CD14-positive monocyte (primary cell): ENCODE measurements at regions of chr4 and their contacts with region 1.

Region 1: GRCh38 chr4:5050520-5051277 is 581 bp upstream of the STK32B start:
- DNase-seq: peak; percentile 56 to 76 (median 70)
- H3K4me3 ChIP-seq: peak overlapping the region; percentile 52 to 85 (median 74)
- H3K4me3 Mint-ChIP-seq: peak overlapping the region; percentile 97 to 99
- H3K27ac ChIP-seq: peak overlapping the region in 1 of 2 donors; percentile 15
- H3K27ac Mint-ChIP-seq: peak overlapping the region in 5 of 7 donors; percentile 60 to 85 (median 74)
- H3K4me1 ChIP-seq: peaks cover 26 to 32% of the 10 kb centered on the region in 2 donors
- H3K4me1 Mint-ChIP-seq: peaks cover 46% of the 10 kb centered on the region
- H3K27me3 ChIP-seq: peaks cover 0 to 9% of the 10 kb centered on the region in 2 donors
- H3K27me3 Mint-ChIP-seq: peaks cover 3 to 7% (median 7%) of the 10 kb centered on the region in 3 donors
- CTCF ChIP-seq: peak; percentile 67

Region 2: GRCh38 chr4:4880492-4880891 is 170.2 kb before region 1 on chr4:
- intact Hi-C with region 1: no loop called
- DNase-seq: no peak
- H3K4me3 ChIP-seq: no peak overlapping the region
- H3K4me3 Mint-ChIP-seq: no peak overlapping the region
- H3K27ac ChIP-seq: no peak overlapping the region
- H3K27ac Mint-ChIP-seq: no peak overlapping the region
- H3K4me1 ChIP-seq: no peaks in the 10 kb centered on the region
- H3K4me1 Mint-ChIP-seq: no peaks in the 10 kb centered on the region
- H3K27me3 ChIP-seq: peaks cover 1 to 7% of the 10 kb centered on the region in 2 donors
- H3K27me3 Mint-ChIP-seq: peaks cover 17 to 22% (median 22%) of the 10 kb centered on the region in 3 donors
- CTCF ChIP-seq: no peak

Region 3: DNA sequence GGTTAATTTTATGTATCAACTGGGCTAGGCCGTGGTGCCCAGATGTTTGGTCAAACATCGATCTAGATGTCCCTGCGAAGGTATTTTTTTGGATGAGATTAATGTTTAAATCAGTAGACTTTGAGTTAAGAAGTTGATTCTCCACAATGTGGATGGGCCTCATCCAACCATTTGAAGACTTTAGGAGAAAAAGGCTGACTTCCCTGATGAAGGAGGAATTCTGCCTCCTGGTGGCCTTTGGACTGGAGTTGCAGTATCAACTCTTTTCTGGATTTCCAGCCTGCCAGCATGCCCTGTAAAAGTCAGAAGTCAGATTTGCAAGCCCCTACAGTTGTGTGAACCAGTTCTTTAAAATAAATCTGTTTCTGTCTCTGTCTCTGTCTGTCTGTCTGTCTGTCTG is 92.0 kb after region 1 on chr4:
- intact Hi-C with region 1: loop called in 1 of 2 experiments (anchors 5 kb)
- DNase-seq: peak; percentile 14 to 40 (median 32)
- H3K4me3 ChIP-seq: no peak overlapping the region
- H3K4me3 Mint-ChIP-seq: no peak overlapping the region
- H3K27ac ChIP-seq: no peak overlapping the region
- H3K27ac Mint-ChIP-seq: no peak overlapping the region
- H3K4me1 ChIP-seq: no peaks in the 10 kb centered on the region
- H3K4me1 Mint-ChIP-seq: no peaks in the 10 kb centered on the region
- H3K27me3 ChIP-seq: no peaks in the 10 kb centered on the region
- H3K27me3 Mint-ChIP-seq: peaks cover 0 to 5% (median 3%) of the 10 kb centered on the region in 3 donors
- CTCF ChIP-seq: peak; percentile 65

Region 4: DNA sequence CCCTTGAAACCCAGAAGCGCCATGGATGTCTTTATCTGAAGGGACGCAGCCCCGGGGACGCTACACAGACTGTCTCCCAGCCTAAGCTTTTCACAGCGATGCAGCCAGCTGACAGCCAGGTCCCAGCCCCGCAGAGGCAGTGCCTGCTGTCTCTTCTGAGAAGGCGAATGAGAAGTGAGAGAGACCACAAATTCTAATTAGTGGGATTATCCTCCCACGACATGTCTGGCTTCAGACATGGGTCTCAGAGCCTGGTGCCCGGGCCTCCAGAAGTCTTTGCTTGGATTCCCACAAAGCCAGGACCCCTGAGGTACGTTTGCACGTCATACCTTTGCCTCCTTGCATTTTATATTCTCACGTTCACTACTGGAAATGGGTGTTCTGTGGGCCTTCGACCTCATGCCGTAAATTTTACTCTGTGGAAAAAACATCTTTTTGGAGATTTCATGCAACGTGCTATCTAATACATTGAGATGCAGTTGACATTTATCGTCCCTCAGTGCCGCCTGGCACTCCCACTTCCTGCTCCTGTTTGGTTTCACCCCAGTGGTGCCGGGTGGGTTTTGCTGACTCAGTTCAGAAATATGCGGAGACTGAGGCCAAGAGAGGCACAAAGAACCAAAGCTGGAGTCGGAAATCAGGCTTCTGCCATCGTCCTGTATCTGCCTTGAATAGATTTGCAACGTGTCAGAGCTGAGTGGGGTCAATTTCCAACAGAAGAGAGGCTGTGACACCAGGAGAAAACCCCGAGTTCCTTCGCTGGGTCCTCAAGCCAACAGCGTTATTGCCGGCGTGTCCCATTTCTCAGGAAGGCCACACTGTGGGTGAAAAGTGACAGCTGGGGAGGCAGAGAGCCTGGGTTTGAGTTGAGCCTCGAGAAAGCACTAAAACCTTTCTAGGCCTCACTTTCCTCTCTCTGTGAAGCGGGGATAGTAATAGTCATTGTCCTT is 115.0 kb after region 1 on chr4:
- intact Hi-C with region 1: no loop called
- DNase-seq: no peak
- H3K4me3 ChIP-seq: no peak overlapping the region
- H3K4me3 Mint-ChIP-seq: no peak overlapping the region
- H3K27ac ChIP-seq: no peak overlapping the region
- H3K27ac Mint-ChIP-seq: no peak overlapping the region
- H3K4me1 ChIP-seq: no peaks in the 10 kb centered on the region
- H3K4me1 Mint-ChIP-seq: no peaks in the 10 kb centered on the region
- H3K27me3 ChIP-seq: no peaks in the 10 kb centered on the region
- H3K27me3 Mint-ChIP-seq: peaks cover 0 to 3% (median 0%) of the 10 kb centered on the region in 3 donors
- CTCF ChIP-seq: no peak